Right ventricle myocardium inferior (tissue), 1 donor: ENCODE measurements at regions of chr12 and their contacts with region 1.

Region 1: DNA sequence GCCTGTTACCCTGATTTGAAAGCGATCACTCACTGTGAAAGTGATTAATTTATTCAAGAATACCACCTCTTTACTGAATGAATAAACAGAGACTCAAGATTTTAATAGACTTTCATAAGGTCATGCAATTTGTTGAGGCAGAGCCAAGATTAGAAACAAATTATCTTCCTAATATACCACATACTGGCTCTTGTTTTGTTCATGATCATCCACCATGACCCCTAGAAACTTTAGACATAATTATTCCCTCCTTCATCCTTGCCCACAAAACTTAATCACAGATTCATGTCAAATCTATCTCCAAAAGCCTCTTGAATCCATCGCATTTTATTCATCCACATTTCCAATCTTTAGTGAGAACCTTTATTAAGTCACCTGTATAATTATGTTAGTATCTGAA is 152.3 kb downstream of the ATXN7L3B start:
- DNase-seq: no peak
- ATAC-seq: no peak

Region 2: GRCh38 chr12:74663958-74664357 is 26.0 kb before region 1 on chr12:
- intact Hi-C with region 1: no loop called
- DNase-seq: peak; percentile 61
- ATAC-seq: no peak

Region 3: DNA sequence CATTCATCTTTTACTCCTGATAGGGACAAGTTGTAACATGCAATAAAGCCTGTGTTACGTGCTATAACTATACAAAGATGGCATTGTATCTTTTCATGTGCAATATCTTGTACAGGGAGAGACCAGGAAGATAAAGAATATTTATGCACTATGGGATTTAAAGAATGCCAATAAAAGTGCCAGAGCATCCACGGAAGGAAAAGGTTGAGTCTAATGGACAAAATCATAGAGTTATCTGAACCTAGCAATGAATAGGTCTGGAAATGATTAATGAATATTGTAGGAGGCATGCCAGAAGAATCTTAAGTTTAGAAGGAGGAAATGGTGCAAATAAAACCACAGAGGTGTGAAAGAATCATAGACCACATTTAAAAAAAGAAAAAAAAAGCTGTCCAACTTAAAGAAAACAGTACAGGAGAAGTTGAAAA is 255.9 kb after region 1 on chr12:
- intact Hi-C with region 1: no loop called
- DNase-seq: no peak
- ATAC-seq: no peak

Region 4: DNA sequence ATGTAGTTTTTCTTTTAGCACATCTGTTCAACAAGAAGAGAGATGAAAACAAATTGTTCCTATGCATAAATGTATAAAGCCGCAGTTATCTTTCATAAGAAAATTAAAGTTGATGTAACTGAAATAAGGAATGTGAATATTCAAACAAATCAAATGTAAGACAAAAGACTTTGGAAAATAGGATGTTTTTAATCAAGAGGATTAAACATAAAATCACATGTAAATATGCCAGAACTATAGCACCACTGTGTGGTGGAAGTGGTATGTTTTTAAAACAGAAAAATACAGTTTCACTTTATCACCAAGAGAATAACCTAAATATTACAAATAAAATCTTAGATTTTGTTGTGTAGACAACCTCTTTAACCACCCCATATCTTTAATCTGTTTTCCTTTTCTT is 599.8 kb after region 1 on chr12:
- intact Hi-C with region 1: loop called (anchors 5 kb)
- DNase-seq: no peak
- ATAC-seq: no peak